ENCODE measurements at regions of chr6 and their contacts with region 1.

Region 1: DNA sequence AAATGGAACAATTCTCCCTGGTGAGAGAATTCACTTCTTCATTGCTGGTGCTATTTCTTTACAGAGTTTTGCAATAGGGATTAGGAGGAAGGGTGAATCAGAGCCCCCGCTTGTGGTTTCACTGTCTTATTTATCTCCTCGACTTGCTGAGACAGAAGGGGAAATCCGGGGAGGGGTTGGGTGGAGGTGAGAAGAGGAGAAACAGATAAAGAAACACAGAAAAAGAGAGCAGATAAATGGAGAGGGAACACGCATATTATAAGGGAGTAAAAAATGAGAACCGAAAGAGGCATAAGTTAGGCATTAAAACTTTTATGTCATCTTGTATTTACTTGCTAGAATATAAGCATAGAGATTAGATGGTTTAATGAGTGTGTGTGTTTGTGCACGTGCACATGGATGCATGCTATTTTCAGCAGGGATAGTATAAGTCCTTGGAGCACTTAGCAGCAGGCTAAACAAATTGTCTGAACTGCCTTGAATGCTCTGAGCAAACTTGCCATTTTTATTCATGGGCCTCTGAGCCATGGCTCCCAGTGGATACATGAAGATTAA is 105.0 kb downstream of the OLIG3 start:
- DNase-seq: peak; percentile 63 to 88 (median 71)
- H3K4me3 ChIP-seq: peak overlapping the region in 1 of 2 donors; percentile 8
- H3K4me3 Mint-ChIP-seq: peak overlapping the region; percentile 63 to 85 (median 80)
- H3K27ac ChIP-seq: peak overlapping the region; percentile 53
- H3K27ac Mint-ChIP-seq: peak overlapping the region; percentile 63 to 98 (median 93)
- H3K4me1 ChIP-seq: peaks cover 66% of the 10 kb centered on the region
- H3K4me1 Mint-ChIP-seq: peaks cover 61 to 87% (median 73%) of the 10 kb centered on the region in 4 donors
- H3K27me3 ChIP-seq: no peaks in the 10 kb centered on the region
- H3K27me3 Mint-ChIP-seq: no peaks in the 10 kb centered on the region

Region 2: DNA sequence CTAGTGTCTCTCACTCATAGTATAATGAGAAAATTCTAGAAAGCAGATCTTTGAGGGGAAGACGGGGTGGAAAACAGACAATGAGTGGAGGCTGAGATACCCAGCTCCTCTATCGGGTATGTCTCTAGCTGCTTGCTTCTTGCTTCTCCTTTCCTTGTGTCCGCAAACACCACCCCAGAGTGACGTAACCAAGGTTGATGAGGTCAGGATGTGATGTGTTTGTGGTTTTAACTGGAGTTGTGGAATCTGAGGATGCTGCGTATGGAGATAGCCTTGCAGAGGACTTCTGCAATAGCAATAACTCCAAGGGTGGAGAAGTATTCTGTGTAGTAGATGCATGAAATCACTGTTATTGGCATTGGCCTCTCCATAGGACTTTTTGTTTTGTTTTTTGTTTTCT is 37.3 kb before region 1 on chr6:
- CTCF ChIA-PET with region 1: no interaction called
- POLR2A ChIA-PET with region 1: no interaction called
- intact Hi-C with region 1: loop called (anchors 5 kb)
- DNase-seq: no peak
- H3K4me3 ChIP-seq: no peak overlapping the region
- H3K4me3 Mint-ChIP-seq: no peak overlapping the region
- H3K27ac ChIP-seq: no peak overlapping the region
- H3K27ac Mint-ChIP-seq: peak overlapping the region in 4 of 7 donors; percentile 25 to 81 (median 29)
- H3K4me1 ChIP-seq: peaks cover 15% of the 10 kb centered on the region
- H3K4me1 Mint-ChIP-seq: peaks cover 12 to 22% (median 21%) of the 10 kb centered on the region in 4 donors
- H3K27me3 ChIP-seq: no peaks in the 10 kb centered on the region
- H3K27me3 Mint-ChIP-seq: no peaks in the 10 kb centered on the region

Region 3: GRCh38 chr6:137363805-137364138 is 25.5 kb before region 1 on chr6:
- CTCF ChIA-PET with region 1: interaction called, 5 read pairs
- POLR2A ChIA-PET with region 1: interaction called, 13 read pairs
- intact Hi-C with region 1: loop called (anchors 2 kb)
- DNase-seq: peak in 4 of 5 donors; percentile 62 to 74 (median 69)
- H3K4me3 ChIP-seq: no peak overlapping the region
- H3K4me3 Mint-ChIP-seq: peak overlapping the region; percentile 7 to 77 (median 68)
- H3K27ac ChIP-seq: no peak overlapping the region
- H3K27ac Mint-ChIP-seq: peak overlapping the region in 6 of 7 donors; percentile 12 to 90 (median 72)
- H3K4me1 ChIP-seq: peaks cover 27% of the 10 kb centered on the region
- H3K4me1 Mint-ChIP-seq: peaks cover 26 to 38% (median 32%) of the 10 kb centered on the region in 4 donors
- H3K27me3 ChIP-seq: no peaks in the 10 kb centered on the region
- H3K27me3 Mint-ChIP-seq: no peaks in the 10 kb centered on the region

Region 4: DNA sequence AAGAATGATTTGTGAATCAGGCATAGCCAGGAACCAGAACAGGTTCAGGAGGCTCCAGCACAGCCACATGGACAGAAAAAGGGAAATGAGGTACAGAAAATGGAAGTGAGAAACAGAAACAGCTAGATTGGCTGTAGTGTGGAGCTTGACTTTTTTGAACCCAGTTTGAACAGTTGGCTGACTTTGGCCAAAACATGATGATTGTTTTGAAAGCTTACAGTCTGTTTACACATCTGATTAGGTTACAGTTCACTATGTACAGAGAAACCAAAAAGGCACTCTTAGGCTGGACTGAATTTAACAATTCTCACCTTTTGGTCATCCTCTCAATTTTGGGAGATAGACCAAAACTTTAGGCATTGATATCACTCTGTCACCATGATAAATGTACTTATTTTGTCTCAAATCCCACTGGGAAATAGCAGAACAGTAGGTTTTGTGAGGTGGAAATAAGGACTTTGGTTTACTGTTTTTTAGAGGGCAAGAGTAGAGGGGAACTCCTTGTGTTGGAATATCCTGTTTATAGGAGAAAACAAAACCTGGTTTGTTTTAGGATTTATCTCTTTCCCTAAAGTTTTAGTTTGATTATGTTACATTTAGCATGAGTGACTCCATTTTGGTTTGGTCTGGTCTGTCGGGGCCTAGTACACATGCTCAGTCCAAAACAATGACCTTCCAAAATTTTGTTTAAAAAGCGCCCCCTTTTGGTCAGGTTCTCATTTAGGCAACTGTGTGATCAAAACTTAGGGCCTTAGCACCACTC is 18.2 kb before region 1 on chr6:
- CTCF ChIA-PET with region 1: interaction called, 10 read pairs
- POLR2A ChIA-PET with region 1: interaction called, 10 read pairs
- intact Hi-C with region 1: no loop called
- DNase-seq: no peak
- H3K4me3 ChIP-seq: no peak overlapping the region
- H3K4me3 Mint-ChIP-seq: no peak overlapping the region
- H3K27ac ChIP-seq: no peak overlapping the region
- H3K27ac Mint-ChIP-seq: peak overlapping the region in 1 of 7 donors; percentile 25
- H3K4me1 ChIP-seq: peaks cover 9% of the 10 kb centered on the region
- H3K4me1 Mint-ChIP-seq: peaks cover 5 to 11% (median 8%) of the 10 kb centered on the region in 4 donors
- H3K27me3 ChIP-seq: no peaks in the 10 kb centered on the region
- H3K27me3 Mint-ChIP-seq: no peaks in the 10 kb centered on the region

Region 5: DNA sequence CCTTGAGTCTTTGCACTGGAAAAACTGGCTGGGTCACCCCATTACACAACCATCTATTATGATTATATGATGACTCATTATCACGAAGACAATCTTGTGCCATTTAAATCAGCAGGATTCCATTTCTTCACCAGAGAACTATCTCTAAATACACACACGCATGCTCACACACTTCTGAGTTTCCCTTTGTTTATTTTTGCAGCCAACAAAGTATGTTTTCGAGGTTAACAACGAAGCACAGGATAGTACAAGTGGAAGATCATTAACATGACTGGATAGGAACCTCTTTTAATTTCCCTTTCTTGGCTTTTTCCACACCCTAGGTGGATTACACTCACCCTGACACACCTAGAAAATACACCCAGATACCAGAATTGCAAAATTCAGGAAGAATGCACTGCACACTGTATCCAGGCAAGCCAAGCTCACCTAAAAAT is 699.1 kb after region 1 on chr6:
- CTCF ChIA-PET with region 1: no interaction called
- POLR2A ChIA-PET with region 1: no interaction called
- intact Hi-C with region 1: no loop called
- DNase-seq: no peak
- H3K4me3 ChIP-seq: no peak overlapping the region
- H3K4me3 Mint-ChIP-seq: no peak overlapping the region
- H3K27ac ChIP-seq: no peak overlapping the region
- H3K27ac Mint-ChIP-seq: no peak overlapping the region
- H3K4me1 ChIP-seq: no peaks in the 10 kb centered on the region
- H3K4me1 Mint-ChIP-seq: no peaks in the 10 kb centered on the region
- H3K27me3 ChIP-seq: no peaks in the 10 kb centered on the region
- H3K27me3 Mint-ChIP-seq: no peaks in the 10 kb centered on the region

Measured in CD4-positive, alpha-beta memory T cell (primary cell).